Panc1 (cell line): ENCODE measurements at regions of chr10 and their contacts with region 1.

Region 1: DNA sequence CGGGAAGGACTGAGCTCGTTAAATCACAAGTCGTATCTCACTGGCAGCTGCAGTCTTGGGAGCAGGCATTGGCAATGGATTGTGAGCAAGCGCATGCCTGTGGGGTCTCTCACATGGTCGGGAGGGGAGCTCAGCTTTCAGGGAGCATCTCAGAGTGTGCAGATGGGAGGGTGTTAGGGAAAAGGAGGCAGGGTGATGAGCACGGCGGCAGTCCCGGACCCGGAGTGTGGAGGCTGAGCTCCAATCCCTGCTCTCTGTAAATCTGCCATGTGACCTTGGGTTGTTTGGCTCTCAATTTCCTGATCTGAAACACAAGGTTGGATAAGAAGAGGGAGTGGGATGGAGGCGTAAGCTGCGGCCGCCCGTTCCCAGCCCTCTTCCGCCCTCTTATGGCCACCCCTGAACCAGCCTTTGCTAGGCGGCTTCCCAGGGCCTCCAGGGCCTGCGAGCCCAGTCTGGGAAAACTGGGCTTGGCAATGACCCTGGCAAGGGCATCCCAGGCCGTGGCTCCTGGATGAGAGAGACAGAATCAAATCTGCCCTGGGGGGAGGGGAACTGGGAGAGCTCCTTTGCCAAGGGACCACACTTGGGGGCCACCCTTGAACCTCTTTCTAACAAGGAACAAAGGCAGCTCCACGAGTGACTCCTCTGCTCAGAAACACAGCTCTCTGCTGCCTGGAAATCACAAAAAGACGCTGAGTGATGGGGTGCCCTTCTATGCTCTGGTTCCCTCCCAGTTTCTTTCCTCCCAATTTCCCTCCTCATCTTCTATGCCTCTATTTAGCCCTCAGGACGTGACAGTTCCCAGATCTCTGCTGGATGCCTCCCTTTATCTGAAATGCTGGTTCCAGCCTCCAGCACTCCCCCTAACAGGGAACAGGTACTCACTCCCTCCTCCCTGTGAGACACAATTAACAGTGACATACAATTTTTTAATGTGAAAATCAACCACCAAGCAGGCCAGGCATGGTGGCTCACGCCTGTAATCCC is 41.7 kb upstream of the LOXL4 start:
- DNase-seq: no peak
- ATAC-seq: peak; percentile 99
- H3K4me3 ChIP-seq: peak overlapping the region in 1 of 2 experiments; percentile 43; a peak in 2 of 4 replicates
- H3K27ac ChIP-seq: no peak overlapping the region; the same call in 1 of the 2 replicates
- H3K4me1 ChIP-seq: peaks cover 13% of the 10 kb centered on the region
- H3K27me3 ChIP-seq: no peaks in the 10 kb centered on the region
- CTCF ChIP-seq: peak; percentile 95

Region 2: GRCh38 chr10:97869091-97870042 is 440.3 kb before region 1 on chr10:
- CTCF ChIA-PET with region 1: no interaction called
- POLR2A ChIA-PET with region 1: no interaction called
- in situ Hi-C with region 1: no loop called
- intact Hi-C with region 1: no loop called
- DNase-seq: peak; percentile 72
- ATAC-seq: peak; percentile 98
- H3K4me3 ChIP-seq: peak overlapping the region in 1 of 2 experiments; percentile 6; a peak in 1 of 4 replicates
- H3K27ac ChIP-seq: peak overlapping the region; percentile 39
- H3K4me1 ChIP-seq: peaks cover 15% of the 10 kb centered on the region
- H3K27me3 ChIP-seq: peaks cover 2% of the 10 kb centered on the region; the same call in 1 of the 2 replicates
- CTCF ChIP-seq: peak; percentile 90

Region 3: DNA sequence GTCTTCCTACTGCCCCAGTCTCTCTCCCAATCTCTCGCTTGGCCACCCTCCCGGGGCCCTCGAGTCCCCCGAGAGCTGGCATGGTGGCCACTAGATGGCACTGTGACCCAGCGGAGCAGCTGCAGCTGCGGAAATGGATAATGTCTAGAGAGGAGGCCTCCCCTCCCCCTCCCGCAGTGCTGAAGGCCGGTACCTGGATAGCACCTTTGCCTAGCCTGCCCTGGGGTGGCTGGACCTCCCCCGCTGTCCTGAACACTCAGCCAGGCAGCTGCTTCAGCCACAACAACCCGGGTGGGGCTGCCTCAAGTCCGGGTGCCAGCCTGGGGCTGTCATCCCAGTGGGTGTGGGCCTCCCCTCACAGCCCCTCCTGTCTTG is 394.8 kb before region 1 on chr10:
- CTCF ChIA-PET with region 1: no interaction called
- POLR2A ChIA-PET with region 1: no interaction called
- in situ Hi-C with region 1: no loop called
- intact Hi-C with region 1: loop called (anchors 10 kb)
- DNase-seq: peak; percentile 35
- ATAC-seq: peak; percentile 93
- H3K4me3 ChIP-seq: no peak overlapping the region
- H3K27ac ChIP-seq: no peak overlapping the region
- H3K4me1 ChIP-seq: peaks cover 3% of the 10 kb centered on the region; the same call in 1 of the 2 replicates
- H3K27me3 ChIP-seq: peaks cover 12% of the 10 kb centered on the region
- CTCF ChIP-seq: peak; percentile 99

Region 4: DNA sequence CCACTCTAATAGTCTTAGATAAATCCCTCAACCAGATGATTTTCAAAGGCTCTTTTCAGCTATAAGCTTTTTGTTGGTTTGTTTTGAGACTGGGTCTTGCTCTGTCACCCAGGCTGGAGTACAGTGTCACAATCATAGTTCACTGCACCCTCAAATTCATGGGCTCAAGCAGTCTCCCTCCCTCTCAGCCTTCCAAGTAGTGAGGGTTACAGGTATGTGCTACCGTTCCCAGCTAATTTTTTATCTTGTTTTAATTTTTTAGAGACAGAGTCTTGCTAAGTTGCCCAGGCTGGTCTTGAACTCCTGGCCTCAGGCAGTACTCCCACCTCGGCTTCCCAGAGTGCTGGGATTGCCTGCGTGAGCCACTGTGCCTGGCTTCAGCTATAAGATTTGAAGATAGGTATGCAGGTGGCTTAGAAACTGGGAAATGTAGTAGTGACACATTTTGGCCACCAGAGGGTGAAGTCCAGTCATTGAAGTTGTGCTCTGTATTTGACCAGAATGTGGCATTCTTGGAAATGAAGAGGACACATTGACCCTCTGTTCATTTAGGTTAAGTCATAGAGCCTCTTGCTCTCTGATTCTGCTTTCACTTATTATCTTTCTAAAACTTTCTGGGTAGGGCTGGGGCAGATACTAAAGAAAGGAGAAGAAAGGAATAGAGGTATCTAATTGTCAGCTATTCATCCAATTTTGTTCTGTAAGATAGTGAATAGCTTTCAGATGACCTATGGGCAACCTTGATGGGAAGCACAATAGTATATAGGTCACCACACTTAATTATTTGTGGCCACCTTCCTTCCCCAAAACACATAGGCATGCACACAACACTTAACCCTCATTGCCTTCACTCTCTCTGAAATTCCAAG is 139.2 kb before region 1 on chr10:
- CTCF ChIA-PET with region 1: interaction called, 17 read pairs
- POLR2A ChIA-PET with region 1: no interaction called
- in situ Hi-C with region 1: no loop called
- intact Hi-C with region 1: loop called (anchors 1 kb)
- DNase-seq: peak; percentile 53
- ATAC-seq: peak; percentile 96
- H3K4me3 ChIP-seq: no peak overlapping the region
- H3K27ac ChIP-seq: no peak overlapping the region
- H3K4me1 ChIP-seq: no peaks in the 10 kb centered on the region
- H3K27me3 ChIP-seq: no peaks in the 10 kb centered on the region
- CTCF ChIP-seq: peak; percentile 91

Region 5: DNA sequence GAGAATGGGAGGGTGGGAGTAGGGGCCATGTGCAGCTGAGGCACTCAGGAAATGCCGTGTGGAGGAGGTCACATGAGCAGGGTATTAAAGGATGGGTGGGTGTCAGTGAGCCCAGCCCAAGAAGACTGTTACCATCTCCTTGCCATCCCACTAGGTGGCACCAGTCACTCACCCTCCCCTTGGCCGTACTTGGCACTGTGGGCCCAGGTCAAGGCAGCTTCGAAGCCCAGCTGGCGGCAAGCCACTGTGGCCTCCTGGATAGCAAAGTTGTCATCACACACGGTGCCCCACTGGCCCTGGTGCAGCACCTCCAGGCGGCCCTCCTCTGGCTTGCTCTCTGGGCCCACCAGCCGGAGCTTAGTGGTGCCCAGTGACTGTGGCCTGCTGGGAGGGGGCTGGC is 47.1 kb before region 1 on chr10:
- CTCF ChIA-PET with region 1: interaction called, 43 read pairs
- POLR2A ChIA-PET with region 1: interaction called, 3 read pairs
- in situ Hi-C with region 1: no loop called
- intact Hi-C with region 1: loop called (anchors 2 kb)
- DNase-seq: no peak
- ATAC-seq: peak; percentile 84
- H3K4me3 ChIP-seq: no peak overlapping the region
- H3K27ac ChIP-seq: no peak overlapping the region; the same call in 1 of the 2 replicates
- H3K4me1 ChIP-seq: peaks cover 21% of the 10 kb centered on the region
- H3K27me3 ChIP-seq: no peaks in the 10 kb centered on the region
- CTCF ChIP-seq: peak; percentile 91

Region 6: GRCh38 chr10:98269072-98269912 is 40.4 kb before region 1 on chr10:
- CTCF ChIA-PET with region 1: interaction called, 43 read pairs
- POLR2A ChIA-PET with region 1: interaction called, 3 read pairs
- in situ Hi-C with region 1: no loop called
- intact Hi-C with region 1: no loop called
- DNase-seq: no peak
- ATAC-seq: peak; percentile 74
- H3K4me3 ChIP-seq: peak overlapping the region in 1 of 2 experiments; percentile 35; a peak in 2 of 4 replicates
- H3K27ac ChIP-seq: peak overlapping the region; percentile 80
- H3K4me1 ChIP-seq: peaks cover 44% of the 10 kb centered on the region
- H3K27me3 ChIP-seq: no peaks in the 10 kb centered on the region
- CTCF ChIP-seq: no peak

Region 7: GRCh38 chr10:98511876-98512275 is 202.2 kb after region 1 on chr10:
- CTCF ChIA-PET with region 1: no interaction called
- POLR2A ChIA-PET with region 1: no interaction called
- in situ Hi-C with region 1: no loop called
- intact Hi-C with region 1: no loop called
- DNase-seq: no peak
- ATAC-seq: no peak
- H3K4me3 ChIP-seq: no peak overlapping the region
- H3K27ac ChIP-seq: no peak overlapping the region
- H3K4me1 ChIP-seq: no peaks in the 10 kb centered on the region
- H3K27me3 ChIP-seq: peaks cover 12% of the 10 kb centered on the region
- CTCF ChIP-seq: no peak

Region 8: DNA sequence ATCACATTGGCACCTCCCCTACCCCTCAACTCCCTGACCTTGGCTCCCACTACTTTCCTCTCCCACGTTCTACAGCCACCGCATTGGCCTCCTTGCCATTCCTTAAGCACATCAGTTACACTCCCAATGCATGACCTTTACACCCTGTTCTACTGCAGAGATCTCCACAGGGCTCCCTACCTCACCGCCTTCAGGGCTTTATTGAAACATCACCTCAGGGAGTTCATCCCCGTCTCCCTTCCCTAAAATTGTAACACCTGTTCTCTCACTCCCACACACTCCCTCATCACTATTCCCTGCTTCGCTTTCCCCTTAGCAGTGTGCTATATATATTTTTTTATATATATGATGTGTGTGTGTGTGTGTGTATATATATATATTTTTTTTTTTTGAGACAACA is 1038.0 kb after region 1 on chr10:
- CTCF ChIA-PET with region 1: no interaction called
- POLR2A ChIA-PET with region 1: no interaction called
- in situ Hi-C with region 1: no loop called
- intact Hi-C with region 1: no loop called
- DNase-seq: no peak
- ATAC-seq: no peak
- H3K4me3 ChIP-seq: no peak overlapping the region
- H3K27ac ChIP-seq: no peak overlapping the region
- H3K4me1 ChIP-seq: peaks cover 7% of the 10 kb centered on the region
- H3K27me3 ChIP-seq: no peaks in the 10 kb centered on the region
- CTCF ChIP-seq: no peak

Region 9: GRCh38 chr10:99534939-99535763 is 1225.5 kb after region 1 on chr10:
- CTCF ChIA-PET with region 1: no interaction called
- POLR2A ChIA-PET with region 1: interaction called, 10 read pairs
- in situ Hi-C with region 1: no loop called
- intact Hi-C with region 1: no loop called
- DNase-seq: no peak
- ATAC-seq: peak; percentile 77
- H3K4me3 ChIP-seq: peak overlapping the region; percentile 39 to 47
- H3K27ac ChIP-seq: no peak overlapping the region
- H3K4me1 ChIP-seq: no peaks in the 10 kb centered on the region; the same call in 1 of the 2 replicates
- H3K27me3 ChIP-seq: peaks cover 26% of the 10 kb centered on the region
- CTCF ChIP-seq: no peak